SK-N-SH (cell line): ENCODE measurements at regions of chr15 and their contacts with region 1.

Region 1: DNA sequence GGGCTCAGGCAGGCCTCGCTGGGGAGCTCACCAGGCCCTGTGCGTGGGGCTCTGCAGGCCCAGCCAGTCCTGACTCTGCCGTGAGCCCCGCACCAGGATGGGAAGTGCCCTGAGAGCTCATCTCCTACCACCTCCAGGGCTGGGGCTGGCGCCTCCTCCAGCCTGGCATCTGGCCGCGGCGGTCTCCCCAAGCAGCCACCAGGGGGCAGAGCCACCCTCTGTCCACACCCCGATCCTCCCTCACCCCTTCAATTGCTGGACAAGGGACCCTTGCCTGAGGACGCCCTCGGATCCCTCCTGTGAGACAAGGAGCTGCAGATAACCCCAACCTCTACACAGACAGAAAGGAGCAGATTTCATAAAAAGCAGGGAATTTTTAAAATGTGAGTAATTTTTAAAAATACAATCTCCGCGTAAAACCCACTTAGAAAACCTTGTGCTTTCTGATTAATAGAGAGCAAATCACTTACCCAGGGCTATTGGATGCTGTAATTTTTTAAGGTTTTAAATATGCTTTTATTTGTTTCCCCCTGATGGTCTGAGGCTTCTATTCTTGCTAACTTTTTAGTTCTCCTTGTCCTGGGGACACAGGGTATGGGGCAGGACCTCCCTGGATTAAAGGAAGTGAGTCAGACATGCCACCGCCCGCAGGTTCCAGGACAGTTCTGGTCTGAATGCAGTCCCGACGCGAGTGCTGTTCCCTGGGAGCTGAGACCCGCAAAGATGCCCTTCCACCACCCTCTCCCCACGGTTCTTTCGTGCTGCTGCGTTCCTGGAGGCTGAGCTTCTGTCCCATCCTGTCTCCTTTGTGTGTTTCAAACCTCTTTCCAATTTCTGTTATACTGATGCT is 52.3 kb upstream of the CHRNA7 start:
- DNase-seq: peak; percentile 86
- H3K4me3 ChIP-seq: peak overlapping the region in 1 of 2 experiments; percentile 29; a peak in 2 of 4 replicates
- H3K27ac ChIP-seq: peak overlapping the region in 1 of 2 experiments; percentile 78; a peak in 2 of 4 replicates
- H3K4me1 ChIP-seq: peaks cover 0 to 62% of the 10 kb centered on the region in 2 experiments; a peak in 2 of 4 replicates
- H3K27me3 ChIP-seq: no peaks in the 10 kb centered on the region
- CTCF ChIP-seq: peak; percentile 79
- EP300 ChIP-seq: no peak
- RAD21 ChIP-seq: peak; percentile 88

Region 2: DNA sequence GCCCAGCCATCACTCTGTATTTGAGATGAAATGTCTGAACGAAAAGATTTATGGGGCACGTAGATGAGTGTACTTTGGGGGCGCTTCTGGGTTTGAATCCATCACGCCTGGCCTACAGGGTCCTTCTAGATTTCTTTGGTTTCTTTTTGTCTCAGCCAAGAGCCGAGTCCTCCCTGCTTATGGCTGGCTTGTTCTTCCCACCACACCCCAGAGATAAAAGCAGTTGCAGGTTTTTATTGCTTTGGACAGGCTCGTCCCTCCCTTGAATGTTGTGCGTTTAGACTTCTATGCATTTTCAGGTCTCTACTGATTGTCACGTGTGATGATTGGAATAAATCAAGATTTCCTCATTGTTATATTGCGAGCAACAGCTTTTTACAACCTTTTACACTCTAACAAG is 52.5 kb before region 1 on chr15:
- CTCF ChIA-PET with region 1: no interaction called
- POLR2A ChIA-PET with region 1: no interaction called
- DNase-seq: no peak
- H3K4me3 ChIP-seq: no peak overlapping the region
- H3K27ac ChIP-seq: no peak overlapping the region
- H3K4me1 ChIP-seq: no peaks in the 10 kb centered on the region
- H3K27me3 ChIP-seq: no peaks in the 10 kb centered on the region
- CTCF ChIP-seq: no peak
- EP300 ChIP-seq: no peak
- RAD21 ChIP-seq: no peak

Region 3: GRCh38 chr15:31954374-31955172 is 23.5 kb before region 1 on chr15:
- CTCF ChIA-PET with region 1: interaction called, 17 read pairs
- POLR2A ChIA-PET with region 1: no interaction called
- DNase-seq: no peak
- H3K4me3 ChIP-seq: no peak overlapping the region
- H3K27ac ChIP-seq: no peak overlapping the region
- H3K4me1 ChIP-seq: no peaks in the 10 kb centered on the region; a peak in 1 of 4 replicates
- H3K27me3 ChIP-seq: no peaks in the 10 kb centered on the region
- CTCF ChIP-seq: no peak
- EP300 ChIP-seq: no peak
- RAD21 ChIP-seq: no peak

Region 4: GRCh38 chr15:31993062-31993461 is 15.0 kb after region 1 on chr15:
- CTCF ChIA-PET with region 1: interaction called, 22 read pairs
- POLR2A ChIA-PET with region 1: no interaction called
- DNase-seq: no peak
- H3K4me3 ChIP-seq: no peak overlapping the region
- H3K27ac ChIP-seq: no peak overlapping the region
- H3K4me1 ChIP-seq: no peaks in the 10 kb centered on the region
- H3K27me3 ChIP-seq: no peaks in the 10 kb centered on the region
- CTCF ChIP-seq: no peak
- EP300 ChIP-seq: no peak
- RAD21 ChIP-seq: no peak

Region 5: DNA sequence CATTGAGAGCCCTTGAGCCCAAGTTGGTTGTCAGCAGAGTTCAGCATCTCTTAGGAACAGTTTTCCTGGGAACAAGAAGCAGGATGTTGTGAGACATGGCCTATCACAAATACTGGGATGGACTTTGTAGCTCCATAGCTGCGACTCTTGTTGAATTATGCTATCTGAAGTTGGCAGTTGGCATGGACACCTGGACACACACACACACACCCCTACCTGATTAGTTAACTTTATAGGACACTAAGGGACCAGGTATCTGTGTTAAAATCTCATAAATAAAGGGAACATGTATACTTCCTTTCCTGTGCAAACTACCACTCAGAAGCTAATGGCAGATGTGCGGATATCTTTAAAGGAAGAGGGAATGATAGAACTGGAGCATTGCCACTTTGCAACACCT is 42.1 kb after region 1 on chr15:
- CTCF ChIA-PET with region 1: interaction called, 16 read pairs
- POLR2A ChIA-PET with region 1: no interaction called
- DNase-seq: no peak
- H3K4me3 ChIP-seq: no peak overlapping the region
- H3K27ac ChIP-seq: no peak overlapping the region
- H3K4me1 ChIP-seq: no peaks in the 10 kb centered on the region
- H3K27me3 ChIP-seq: no peaks in the 10 kb centered on the region
- CTCF ChIP-seq: no peak
- EP300 ChIP-seq: no peak
- RAD21 ChIP-seq: no peak

Region 6: DNA sequence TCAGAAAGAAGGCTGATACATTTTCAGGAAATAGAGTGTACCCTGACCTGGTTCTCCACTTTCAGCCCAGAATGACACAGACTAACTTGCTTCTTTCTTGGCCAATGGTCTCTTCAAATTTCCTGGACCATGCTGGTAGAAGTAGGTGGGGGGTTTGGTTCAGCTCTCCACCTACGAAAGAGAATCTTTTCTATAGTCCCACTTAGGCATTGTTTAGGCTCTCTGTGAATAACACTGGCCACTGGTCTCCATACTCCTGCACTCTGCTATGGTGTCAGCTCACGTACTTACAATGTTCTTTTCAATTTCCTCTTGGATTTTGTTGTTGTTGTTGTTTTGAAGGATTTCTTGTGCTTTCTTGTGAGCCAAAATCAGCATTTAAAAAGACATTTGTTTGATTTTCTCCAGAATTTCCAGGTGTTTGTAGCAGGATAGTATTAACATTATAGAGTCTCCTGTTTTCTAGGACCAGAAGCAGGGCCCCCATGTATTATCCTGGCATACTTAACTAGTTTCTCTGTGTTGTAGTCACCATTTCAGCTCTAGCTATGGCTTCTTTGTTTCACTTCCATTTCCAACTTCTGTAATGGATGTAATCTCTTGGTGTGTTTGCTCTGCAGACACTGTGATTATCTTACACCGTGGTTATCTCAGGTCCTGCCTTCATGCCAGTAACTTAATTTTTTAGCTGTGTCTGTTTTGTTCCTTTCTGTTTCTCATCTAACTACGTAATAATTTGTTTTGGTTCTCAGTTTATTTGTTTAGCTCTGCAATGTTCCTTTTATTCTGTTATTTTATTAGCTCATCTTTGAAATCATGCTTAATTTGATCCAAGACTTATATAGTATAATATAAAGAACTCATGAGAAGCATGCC is 113.7 kb after region 1 on chr15:
- CTCF ChIA-PET with region 1: interaction called, 12 read pairs
- POLR2A ChIA-PET with region 1: no interaction called
- DNase-seq: peak; percentile 54
- H3K4me3 ChIP-seq: no peak overlapping the region; a peak in 1 of 4 replicates
- H3K27ac ChIP-seq: peak overlapping the region in 1 of 2 experiments; percentile 99; a peak in 2 of 4 replicates
- H3K4me1 ChIP-seq: peaks cover 0 to 30% of the 10 kb centered on the region in 2 experiments; a peak in 2 of 4 replicates
- H3K27me3 ChIP-seq: no peaks in the 10 kb centered on the region
- CTCF ChIP-seq: no peak
- EP300 ChIP-seq: peak in 1 of 2 experiments; percentile 91; a peak in 2 of 4 replicates
- RAD21 ChIP-seq: peak; percentile 32